ENCODE measurements at regions of chr1 and their contacts with region 1.

Region 1: DNA sequence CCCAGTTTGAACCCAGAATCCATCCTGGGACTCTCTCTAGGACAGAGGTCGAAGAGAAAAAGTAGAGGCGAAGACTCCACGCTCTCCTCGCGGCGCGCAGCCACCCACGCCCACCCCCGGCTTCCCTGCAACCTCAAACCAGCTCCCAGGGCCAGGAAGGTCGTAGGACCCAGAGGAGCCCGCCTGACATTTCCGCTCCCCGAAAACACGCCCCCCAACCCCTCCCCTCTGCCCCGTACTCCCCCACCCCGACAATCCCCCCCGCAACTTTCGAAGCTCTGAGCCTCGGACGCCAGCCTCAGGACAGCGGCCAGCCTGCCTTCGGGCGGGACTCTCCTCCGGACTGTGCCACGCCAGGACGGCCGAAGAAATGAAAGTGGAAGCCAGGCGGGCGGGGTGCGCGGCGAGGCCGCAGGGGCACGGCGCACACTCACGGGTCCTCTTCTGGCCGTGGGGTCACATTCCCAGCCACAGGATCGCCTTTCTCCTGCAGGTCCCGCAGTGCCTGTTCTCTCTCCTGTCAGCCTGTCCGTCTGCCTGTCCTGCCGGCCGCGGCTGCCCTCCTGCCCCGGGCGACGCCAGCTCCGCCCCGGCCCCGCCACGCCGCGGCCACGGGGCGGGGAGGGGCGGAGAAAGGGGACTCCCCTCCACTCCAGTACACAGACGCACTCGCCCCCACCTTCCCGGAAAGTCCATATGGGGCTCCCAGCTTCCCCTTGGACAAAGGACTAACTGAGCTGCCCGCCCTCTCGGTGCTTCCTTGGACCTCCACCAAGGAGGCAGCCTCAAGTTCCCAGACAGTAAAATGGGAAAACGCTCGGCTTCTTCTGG is at the start of gene MOB3C:
- DNase-seq: peak; percentile 63 to 80
- ATAC-seq: peak; percentile 86 to 90 (median 88)
- H3K4me3 ChIP-seq: peak within 1 kb of the TSS; percentile 93
- H3K4me3 Mint-ChIP-seq: peak within 1 kb of the TSS; percentile 84
- H3K27ac ChIP-seq: peak within 1 kb of the TSS; percentile 85
- H3K27ac Mint-ChIP-seq: peak within 1 kb of the TSS; percentile 81 to 94
- H3K4me1 ChIP-seq: peaks cover 53% of the 10 kb centered on the region
- H3K4me1 Mint-ChIP-seq: peaks cover 36 to 52% of the 10 kb centered on the region in 2 donors
- H3K27me3 ChIP-seq: no peaks in the 10 kb centered on the region
- H3K27me3 Mint-ChIP-seq: no peaks in the 10 kb centered on the region
- CTCF ChIP-seq: no peak
- total RNA-seq, gene MOB3C: 16.7 to 25.1 (median 19.2) TPM

Region 2: GRCh38 chr1:46603858-46604549 is 12.5 kb before region 1 on chr1 and contains the start of gene MKNK1:
- intact Hi-C with region 1: loop called (anchors 1 kb)
- DNase-seq: peak; percentile 98 to 100
- ATAC-seq: peak; percentile 97 to 99 (median 98)
- H3K4me3 ChIP-seq: peak within 1 kb of the TSS; percentile 79
- H3K4me3 Mint-ChIP-seq: peak within 1 kb of the TSS; percentile 95
- H3K27ac ChIP-seq: peak within 1 kb of the TSS; percentile 58
- H3K27ac Mint-ChIP-seq: peak within 1 kb of the TSS; percentile 89 to 90
- H3K4me1 ChIP-seq: peaks cover 27% of the 10 kb centered on the region
- H3K4me1 Mint-ChIP-seq: peaks cover 55 to 58% of the 10 kb centered on the region in 2 donors
- H3K27me3 ChIP-seq: no peaks in the 10 kb centered on the region
- H3K27me3 Mint-ChIP-seq: no peaks in the 10 kb centered on the region
- CTCF ChIP-seq: no peak
- total RNA-seq, gene MKNK1: 59.5 to 81.5 (median 65.5) TPM

Region 3: DNA sequence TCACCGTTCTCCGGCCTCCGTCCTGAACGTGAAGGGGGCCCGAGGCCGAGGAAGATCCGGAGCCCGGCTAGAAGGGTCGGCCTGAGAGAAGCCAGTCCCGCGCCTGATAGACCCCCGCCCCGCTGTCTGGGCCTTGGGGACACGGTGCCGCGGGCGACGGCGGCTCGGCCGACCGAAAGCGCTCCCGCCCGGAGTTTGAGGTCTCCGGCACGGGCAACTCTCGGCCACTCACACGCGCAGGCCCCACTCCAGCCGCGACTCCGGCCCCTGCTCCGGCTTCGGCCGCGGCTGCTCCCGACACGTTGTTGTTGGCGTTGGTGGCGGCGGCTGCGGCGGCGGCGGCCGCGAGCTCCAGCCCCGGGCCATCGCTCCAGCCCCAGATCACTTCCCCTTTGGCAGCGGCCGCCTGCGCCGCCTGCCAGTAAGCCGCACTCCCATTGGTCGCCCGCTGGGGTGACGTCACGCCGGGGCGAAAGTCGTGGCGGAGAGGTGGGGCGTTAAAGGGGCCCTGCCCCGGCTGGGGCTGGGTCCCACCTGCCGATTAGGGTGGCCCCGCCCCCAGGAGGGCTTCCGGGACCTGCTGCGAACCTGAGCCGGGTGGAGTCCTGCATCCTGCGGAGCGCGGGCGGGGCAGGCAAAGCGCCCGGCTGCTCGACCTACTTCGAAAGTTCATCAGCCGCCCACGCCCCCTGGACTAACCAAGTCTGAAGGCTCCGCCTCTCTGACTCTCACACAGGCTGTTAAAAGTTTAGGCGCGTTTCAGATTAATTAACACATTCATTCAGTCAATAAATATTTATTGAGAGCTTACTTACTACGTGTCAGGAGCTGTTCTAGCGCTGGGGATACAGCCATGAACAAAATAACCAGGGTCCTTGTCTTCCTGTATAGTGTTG is 102.5 kb after region 1 on chr1 and contains the start of gene EFCAB14:
- intact Hi-C with region 1: loop called (anchors 5 kb)
- DNase-seq: peak; percentile 99 to 100
- ATAC-seq: peak; percentile 95 to 96 (median 96)
- H3K4me3 ChIP-seq: peak within 1 kb of the TSS; percentile 90
- H3K4me3 Mint-ChIP-seq: peak within 1 kb of the TSS; percentile 94
- H3K27ac ChIP-seq: peak within 1 kb of the TSS; percentile 69
- H3K27ac Mint-ChIP-seq: peak within 1 kb of the TSS; percentile 84 to 95
- H3K4me1 ChIP-seq: peaks cover 25% of the 10 kb centered on the region
- H3K4me1 Mint-ChIP-seq: peaks cover 32 to 45% of the 10 kb centered on the region in 2 donors
- H3K27me3 ChIP-seq: no peaks in the 10 kb centered on the region
- H3K27me3 Mint-ChIP-seq: no peaks in the 10 kb centered on the region
- CTCF ChIP-seq: no peak
- total RNA-seq, gene EFCAB14: 77.7 to 130 (median 119) TPM

Region 4: GRCh38 chr1:47023302-47024140 is 407.0 kb after region 1 on chr1 and contains the start of gene CYP4X1:
- intact Hi-C with region 1: no loop called
- DNase-seq: no peak
- ATAC-seq: no peak
- H3K4me3 ChIP-seq: no peak within 1 kb of the TSS
- H3K4me3 Mint-ChIP-seq: no peak within 1 kb of the TSS
- H3K27ac ChIP-seq: no peak within 1 kb of the TSS
- H3K27ac Mint-ChIP-seq: no peak within 1 kb of the TSS
- H3K4me1 ChIP-seq: no peaks in the 10 kb centered on the region
- H3K4me1 Mint-ChIP-seq: no peaks in the 10 kb centered on the region
- H3K27me3 ChIP-seq: peaks cover 12% of the 10 kb centered on the region
- H3K27me3 Mint-ChIP-seq: peaks cover 24 to 44% of the 10 kb centered on the region in 2 donors
- CTCF ChIP-seq: no peak
- total RNA-seq, gene CYP4X1: not detected

Measured in natural killer cell (primary cell).